ENCODE measurements at regions of chr18 and their contacts with region 1.

Region 1: GRCh38 chr18:24397694-24398365 is at the start of gene OSBPL1A:
- DNase-seq: peak; percentile 54 to 70 (median 63)
- H3K4me3 ChIP-seq: peak within 1 kb of the TSS; percentile 50 to 66
- H3K4me3 Mint-ChIP-seq: peak within 1 kb of the TSS; percentile 85 to 96 (median 88)
- H3K27ac ChIP-seq: peak within 1 kb of the TSS; percentile 53
- H3K27ac Mint-ChIP-seq: peak within 1 kb of the TSS in 6 of 7 donors; percentile 35 to 89 (median 66)
- H3K4me1 ChIP-seq: peaks cover 12% of the 10 kb centered on the region
- H3K4me1 Mint-ChIP-seq: peaks cover 6 to 16% (median 13%) of the 10 kb centered on the region in 4 donors
- H3K27me3 ChIP-seq: no peaks in the 10 kb centered on the region
- H3K27me3 Mint-ChIP-seq: peaks cover 4 to 20% of the 10 kb centered on the region in 2 donors
- total RNA-seq, gene OSBPL1A: 3.5 to 4.5 TPM

Region 2: GRCh38 chr18:24142376-24142775 is 255.5 kb before region 1 on chr18:
- CTCF ChIA-PET with region 1: no interaction called
- POLR2A ChIA-PET with region 1: no interaction called
- intact Hi-C with region 1: no loop called
- DNase-seq: no peak
- H3K4me3 ChIP-seq: no peak overlapping the region
- H3K4me3 Mint-ChIP-seq: no peak overlapping the region
- H3K27ac ChIP-seq: no peak overlapping the region
- H3K27ac Mint-ChIP-seq: no peak overlapping the region
- H3K4me1 ChIP-seq: peaks cover 22% of the 10 kb centered on the region
- H3K4me1 Mint-ChIP-seq: peaks cover 14 to 28% (median 21%) of the 10 kb centered on the region in 4 donors
- H3K27me3 ChIP-seq: peaks cover 7% of the 10 kb centered on the region
- H3K27me3 Mint-ChIP-seq: peaks cover 10 to 17% of the 10 kb centered on the region in 2 donors

Region 3: DNA sequence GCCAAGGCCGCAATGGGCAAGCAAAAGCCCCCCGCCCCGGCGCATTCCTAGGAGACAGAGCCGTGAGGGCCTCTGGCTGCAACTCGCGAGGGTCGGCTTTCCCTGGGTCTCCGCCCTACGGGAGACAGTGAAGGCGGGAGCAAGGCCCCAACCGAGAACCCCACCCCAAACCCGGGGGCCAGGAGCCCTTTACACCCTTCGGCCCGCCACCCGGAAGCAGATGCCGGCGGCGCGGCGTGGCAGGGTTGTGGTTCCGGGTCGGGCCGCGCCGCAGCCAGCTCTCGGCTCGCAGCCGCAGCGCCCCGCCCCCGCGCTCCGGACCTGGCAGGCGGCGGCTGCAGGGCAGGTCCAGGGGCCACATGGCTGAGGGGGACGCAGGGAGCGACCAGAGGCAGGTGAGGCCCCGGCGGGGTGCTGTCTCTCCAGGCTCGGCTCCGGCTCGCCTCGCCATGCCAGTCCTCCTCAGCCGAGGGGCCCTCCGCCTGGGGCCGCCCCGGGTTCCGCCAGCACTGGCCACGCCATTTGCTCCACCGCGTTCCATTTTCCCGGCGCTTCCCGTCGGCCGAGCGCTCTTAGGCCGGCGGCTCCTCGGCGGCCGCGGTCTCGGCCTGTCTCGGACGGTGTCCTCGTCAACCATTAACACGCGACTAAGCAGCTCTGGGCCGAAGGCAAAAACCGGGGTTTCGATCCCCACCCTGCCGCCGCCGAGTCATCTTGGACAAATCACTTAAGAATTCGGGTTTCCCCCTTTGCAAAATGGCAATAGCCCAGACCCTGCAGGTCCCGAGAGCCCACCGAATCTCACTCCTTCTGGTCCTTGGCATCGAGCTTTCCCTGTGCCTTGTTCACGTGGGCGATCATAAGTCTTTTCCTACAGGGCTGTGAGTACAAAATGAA is 28.8 kb after region 1 on chr18 and contains the start of gene IMPACT:
- CTCF ChIA-PET with region 1: interaction called, 3 read pairs
- POLR2A ChIA-PET with region 1: interaction called, 10 read pairs
- intact Hi-C with region 1: loop called (anchors 2 kb)
- DNase-seq: peak; percentile 52 to 83 (median 78)
- H3K4me3 ChIP-seq: peak within 1 kb of the TSS; percentile 7 to 64
- H3K4me3 Mint-ChIP-seq: peak within 1 kb of the TSS; percentile 85 to 95 (median 88)
- H3K27ac ChIP-seq: peak within 1 kb of the TSS; percentile 44
- H3K27ac Mint-ChIP-seq: peak within 1 kb of the TSS; percentile 45 to 94 (median 81)
- H3K4me1 ChIP-seq: peaks cover 17% of the 10 kb centered on the region
- H3K4me1 Mint-ChIP-seq: peaks cover 16 to 30% (median 18%) of the 10 kb centered on the region in 4 donors
- H3K27me3 ChIP-seq: peaks cover 1% of the 10 kb centered on the region
- H3K27me3 Mint-ChIP-seq: peaks cover 14 to 25% of the 10 kb centered on the region in 2 donors
- total RNA-seq, gene IMPACT: 12.5 to 14.5 TPM

Region 4: GRCh38 chr18:24631243-24632025 is 233.6 kb after region 1 on chr18:
- CTCF ChIA-PET with region 1: no interaction called
- POLR2A ChIA-PET with region 1: no interaction called
- intact Hi-C with region 1: no loop called
- DNase-seq: no peak
- H3K4me3 ChIP-seq: no peak overlapping the region
- H3K4me3 Mint-ChIP-seq: no peak overlapping the region
- H3K27ac ChIP-seq: no peak overlapping the region
- H3K27ac Mint-ChIP-seq: no peak overlapping the region
- H3K4me1 ChIP-seq: no peaks in the 10 kb centered on the region
- H3K4me1 Mint-ChIP-seq: no peaks in the 10 kb centered on the region
- H3K27me3 ChIP-seq: no peaks in the 10 kb centered on the region
- H3K27me3 Mint-ChIP-seq: peaks cover 6 to 7% of the 10 kb centered on the region in 2 donors

Region 5: GRCh38 chr18:24704946-24705630 is 307.3 kb after region 1 on chr18:
- CTCF ChIA-PET with region 1: no interaction called
- POLR2A ChIA-PET with region 1: no interaction called
- intact Hi-C with region 1: no loop called
- DNase-seq: no peak
- H3K4me3 ChIP-seq: no peak overlapping the region
- H3K4me3 Mint-ChIP-seq: no peak overlapping the region
- H3K27ac ChIP-seq: no peak overlapping the region
- H3K27ac Mint-ChIP-seq: no peak overlapping the region
- H3K4me1 ChIP-seq: no peaks in the 10 kb centered on the region
- H3K4me1 Mint-ChIP-seq: no peaks in the 10 kb centered on the region
- H3K27me3 ChIP-seq: no peaks in the 10 kb centered on the region
- H3K27me3 Mint-ChIP-seq: peaks cover 2 to 3% of the 10 kb centered on the region in 2 donors

Measured in CD4-positive, alpha-beta memory T cell (primary cell).